ENCODE measurements at regions of chr11 and their contacts with region 1.

Region 1: GRCh38 chr11:63635762-63636465 is 21.7 kb upstream of the PLAAT3 start:
- DNase-seq: peak; percentile 76
- H3K4me3 ChIP-seq: no peak overlapping the region
- H3K27ac ChIP-seq: no peak overlapping the region
- H3K4me1 ChIP-seq: peaks cover 4% of the 10 kb centered on the region
- H3K27me3 ChIP-seq: no peaks in the 10 kb centered on the region
- CTCF ChIP-seq: peak; percentile 64 to 80 (median 66)
- POLR2A ChIP-seq: no peak

Region 2: GRCh38 chr11:63489879-63490278 is 146.0 kb before region 1 on chr11:
- intact Hi-C with region 1: loop called (anchors 10 kb)
- DNase-seq: peak; percentile 49
- H3K4me3 ChIP-seq: peak overlapping the region; percentile 48 to 71
- H3K27ac ChIP-seq: peak overlapping the region; percentile 56 to 93
- H3K4me1 ChIP-seq: peaks cover 26% of the 10 kb centered on the region
- H3K27me3 ChIP-seq: no peaks in the 10 kb centered on the region
- CTCF ChIP-seq: no peak
- POLR2A ChIP-seq: no peak